Calu3 (cell line): ENCODE measurements at regions of chr2 and their contacts with region 1.

Region 1: DNA sequence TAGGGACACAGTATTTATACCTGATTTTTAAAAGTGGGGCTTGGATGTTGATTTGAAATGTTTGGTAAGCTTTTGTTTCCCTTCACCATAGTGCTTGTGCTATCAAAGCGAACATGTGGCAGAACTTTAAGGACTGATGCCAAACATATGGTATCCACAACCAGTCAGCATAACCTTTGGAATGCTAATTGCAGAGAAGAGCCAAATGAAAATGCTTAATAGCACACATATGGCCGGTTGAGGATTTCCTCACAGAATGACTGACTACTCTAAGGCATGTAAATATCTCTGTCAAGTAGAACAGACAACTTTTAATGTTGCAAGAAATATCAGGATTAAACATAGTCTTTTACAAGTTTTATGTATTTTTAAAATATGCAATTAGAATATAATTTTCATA is 120.9 kb upstream of the COL3A1 start:
- DNase-seq: no peak
- H3K4me3 Mint-ChIP-seq: no peak overlapping the region
- H3K27ac Mint-ChIP-seq: no peak overlapping the region
- H3K4me1 Mint-ChIP-seq: no peaks in the 10 kb centered on the region
- H3K27me3 Mint-ChIP-seq: no peaks in the 10 kb centered on the region
- CTCF ChIP-seq: no peak

Region 2: DNA sequence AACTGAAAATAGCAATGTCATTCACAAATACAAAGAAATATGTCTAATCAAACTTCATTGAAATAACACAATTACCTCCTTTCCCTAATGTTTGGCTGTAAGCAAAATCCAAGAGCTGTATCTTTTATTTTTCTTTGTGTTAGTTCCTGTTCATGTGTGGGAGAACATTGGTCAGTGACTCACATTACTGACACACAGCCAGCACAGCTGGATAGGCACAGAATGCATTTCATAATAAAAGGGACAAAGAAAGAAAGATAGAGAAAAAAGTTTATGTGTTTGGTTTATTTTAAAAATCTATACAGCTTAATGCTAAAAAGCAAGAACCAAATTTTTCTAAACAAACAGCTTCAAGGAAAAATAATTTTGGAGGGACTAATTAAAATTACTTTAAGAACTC is 64.7 kb before region 1 on chr2:
- CTCF ChIA-PET with region 1: no interaction called
- intact Hi-C with region 1: loop called (anchors 1 kb)
- DNase-seq: peak; percentile 11
- H3K4me3 Mint-ChIP-seq: no peak overlapping the region
- H3K27ac Mint-ChIP-seq: no peak overlapping the region
- H3K4me1 Mint-ChIP-seq: peaks cover 8% of the 10 kb centered on the region
- H3K27me3 Mint-ChIP-seq: no peaks in the 10 kb centered on the region
- CTCF ChIP-seq: no peak

Region 3: DNA sequence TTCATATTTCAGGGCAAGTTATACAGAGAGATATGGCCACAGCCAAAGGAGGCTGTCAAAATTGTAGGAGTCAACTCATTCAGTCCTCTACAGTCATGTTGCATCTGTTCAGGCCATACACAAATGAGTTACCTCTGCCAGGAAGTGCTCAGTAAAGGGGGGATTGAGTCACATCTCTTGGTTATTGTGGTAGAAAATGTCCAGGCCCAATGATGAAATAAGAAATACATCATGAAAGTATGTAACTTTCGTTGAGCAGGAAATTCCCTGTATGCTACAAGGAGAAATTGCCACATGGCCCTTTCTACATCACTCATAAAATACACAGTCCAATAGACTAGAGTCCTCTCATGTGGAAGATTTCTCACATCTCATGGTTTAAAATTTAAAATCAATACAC is 17.0 kb after region 1 on chr2:
- CTCF ChIA-PET with region 1: no interaction called
- intact Hi-C with region 1: loop called (anchors 2 kb)
- DNase-seq: no peak
- H3K4me3 Mint-ChIP-seq: no peak overlapping the region
- H3K27ac Mint-ChIP-seq: no peak overlapping the region
- H3K4me1 Mint-ChIP-seq: no peaks in the 10 kb centered on the region
- H3K27me3 Mint-ChIP-seq: no peaks in the 10 kb centered on the region
- CTCF ChIP-seq: no peak

Region 4: DNA sequence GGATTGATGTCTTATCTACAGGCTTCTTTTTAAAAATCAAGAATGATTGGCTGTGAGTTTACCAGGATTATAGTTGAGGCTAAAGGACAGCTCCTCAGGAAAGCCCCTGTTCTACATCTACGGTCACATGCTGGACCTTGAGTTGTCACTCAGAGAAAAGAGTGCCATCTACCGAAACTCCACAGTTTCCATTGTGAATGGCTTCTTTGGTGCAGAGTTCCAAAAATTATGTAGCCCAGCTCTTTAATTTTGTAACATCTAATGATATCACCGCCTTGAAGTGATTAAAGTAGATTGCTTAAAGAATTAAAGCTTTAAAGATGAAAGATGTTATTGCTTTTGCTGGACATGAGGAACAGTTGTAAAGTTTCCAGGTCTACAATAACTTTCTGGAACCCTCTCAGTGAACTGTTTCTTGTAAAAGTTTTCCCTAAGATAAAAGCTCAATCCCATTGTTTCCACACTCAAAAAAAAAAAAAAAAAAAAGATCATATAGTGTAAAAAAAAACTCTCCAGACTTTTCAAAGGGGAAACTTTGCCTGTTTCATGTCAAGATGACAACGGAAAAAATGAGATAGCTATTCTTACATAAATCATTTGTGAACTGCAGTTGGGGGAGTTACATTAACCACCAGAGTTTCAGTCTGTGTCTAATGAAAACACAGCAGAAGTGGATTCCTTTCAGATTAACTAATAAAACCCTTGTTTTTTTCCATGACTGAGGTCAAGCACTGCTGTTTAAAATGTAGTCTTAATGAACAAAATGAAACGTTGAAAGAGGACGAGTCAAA is 125.2 kb after region 1 on chr2:
- CTCF ChIA-PET with region 1: no interaction called
- intact Hi-C with region 1: no loop called
- DNase-seq: peak; percentile 11
- H3K4me3 Mint-ChIP-seq: no peak overlapping the region
- H3K27ac Mint-ChIP-seq: no peak overlapping the region
- H3K4me1 Mint-ChIP-seq: no peaks in the 10 kb centered on the region
- H3K27me3 Mint-ChIP-seq: no peaks in the 10 kb centered on the region
- CTCF ChIP-seq: no peak